Astrocyte of the cerebellum (primary cell): ENCODE measurements at regions of chr3 and their contacts with region 1.

Region 1: DNA sequence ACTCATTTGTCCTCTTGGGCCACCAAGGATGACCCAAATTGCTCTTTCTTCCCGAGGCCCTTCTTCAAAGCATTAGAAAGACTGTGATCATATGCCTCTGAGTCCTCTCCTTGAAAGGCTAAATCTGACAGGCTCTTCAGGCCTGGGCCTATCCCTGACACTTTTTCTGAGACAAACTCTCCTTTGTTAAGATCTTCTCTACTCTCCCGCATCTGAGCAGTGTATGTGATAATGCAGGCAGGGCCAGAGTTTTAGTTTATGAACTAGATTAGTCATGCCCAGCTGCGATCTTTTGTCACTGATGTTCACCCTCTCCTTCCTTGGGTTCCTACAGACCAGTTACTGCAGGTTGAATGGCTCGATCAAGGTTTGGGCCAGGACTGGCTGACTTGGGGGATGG is 39.2 kb downstream of the MASP1 start:
- DNase-seq: no peak
- H3K4me3 ChIP-seq: no peak overlapping the region
- CTCF ChIP-seq: no peak

Region 2: GRCh38 chr3:186722456-186722855 is 529.9 kb before region 1 on chr3:
- in situ Hi-C with region 1: no loop called
- DNase-seq: no peak
- H3K4me3 ChIP-seq: no peak overlapping the region
- CTCF ChIP-seq: no peak

Region 3: DNA sequence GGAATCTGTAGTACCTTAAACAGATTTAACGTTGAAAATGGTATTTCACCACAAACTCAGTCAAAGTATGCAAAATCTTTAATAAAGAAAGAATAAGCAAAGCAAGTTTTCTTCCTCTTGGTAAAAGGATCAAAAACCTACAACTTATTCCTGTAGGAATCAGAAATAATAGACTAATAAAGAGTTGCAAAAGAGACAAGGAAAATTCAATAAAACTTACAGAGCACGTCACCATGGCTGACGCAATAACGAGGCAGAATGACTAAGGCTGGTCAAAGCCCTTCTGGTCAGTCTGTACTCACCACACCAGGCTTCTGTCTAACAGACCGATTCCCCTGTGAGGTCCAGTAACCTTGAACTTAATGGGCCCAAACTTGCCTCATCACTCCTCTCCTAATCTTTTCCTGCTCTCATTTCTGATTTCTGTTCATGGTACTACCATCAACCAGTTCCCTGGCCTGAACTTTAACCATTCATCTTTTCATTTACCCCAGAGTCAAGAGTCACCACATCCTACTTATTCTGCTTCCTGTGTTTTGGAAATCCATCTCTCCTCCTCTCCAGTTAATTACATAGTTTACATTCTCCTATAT is 34.3 kb after region 1 on chr3:
- in situ Hi-C with region 1: loop called (anchors 5 kb)
- DNase-seq: no peak
- H3K4me3 ChIP-seq: no peak overlapping the region
- CTCF ChIP-seq: no peak